ENCODE measurements at regions of chr5 and their contacts with region 1.

Region 1: GRCh38 chr5:125575891-125576505 is 829.6 kb upstream of the ZNF608 start:
- DNase-seq: peak; percentile 7 to 84 (median 74)
- H3K4me3 ChIP-seq: peak overlapping the region in 29 of 59 donors; percentile 2 to 47 (median 18)
- H3K27ac ChIP-seq: peak overlapping the region in 58 of 59 donors; percentile 1 to 91 (median 78)
- H3K27me3 ChIP-seq: no peaks in the 10 kb centered on the region
- CTCF ChIP-seq: peak in 35 of 56 donors; percentile 8 to 50 (median 33)

Region 2: DNA sequence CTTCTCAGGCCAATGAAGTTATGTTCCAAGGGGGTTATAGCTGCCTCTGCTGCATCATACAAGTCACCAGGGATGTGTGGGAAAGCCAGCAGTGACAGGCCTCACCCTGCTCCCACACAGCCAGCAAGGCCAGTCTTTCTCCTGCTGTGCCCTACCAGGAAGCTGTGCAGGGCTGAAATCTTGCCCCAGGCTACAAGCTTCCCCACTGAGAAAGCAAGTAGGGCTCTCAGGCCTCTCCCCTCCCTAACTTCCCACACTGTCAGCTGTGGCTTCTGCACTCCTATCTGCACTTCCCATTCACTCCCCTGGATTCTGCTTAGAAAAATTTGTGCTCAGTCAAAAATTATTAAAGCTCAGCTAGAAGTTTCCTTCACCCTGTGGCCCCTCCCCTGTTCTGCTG is 218.3 kb before region 1 on chr5:
- intact Hi-C with region 1: no loop called
- DNase-seq: no peak
- H3K4me3 ChIP-seq: no peak overlapping the region
- H3K27ac ChIP-seq: no peak overlapping the region
- H3K27me3 ChIP-seq: no peaks in the 10 kb centered on the region
- CTCF ChIP-seq: no peak

Region 3: GRCh38 chr5:125484742-125485641 is 91.0 kb before region 1 on chr5:
- intact Hi-C with region 1: loop called in 1 of 2 experiments (anchors 10 kb)
- DNase-seq: peak; percentile 22 to 94 (median 84)
- H3K4me3 ChIP-seq: peak overlapping the region in 31 of 59 donors; percentile 1 to 39 (median 12)
- H3K27ac ChIP-seq: peak overlapping the region; percentile 88 to 99 (median 96)
- H3K27me3 ChIP-seq: no peaks in the 10 kb centered on the region
- CTCF ChIP-seq: peak in 5 of 56 donors; percentile 6 to 21 (median 13)

Region 4: DNA sequence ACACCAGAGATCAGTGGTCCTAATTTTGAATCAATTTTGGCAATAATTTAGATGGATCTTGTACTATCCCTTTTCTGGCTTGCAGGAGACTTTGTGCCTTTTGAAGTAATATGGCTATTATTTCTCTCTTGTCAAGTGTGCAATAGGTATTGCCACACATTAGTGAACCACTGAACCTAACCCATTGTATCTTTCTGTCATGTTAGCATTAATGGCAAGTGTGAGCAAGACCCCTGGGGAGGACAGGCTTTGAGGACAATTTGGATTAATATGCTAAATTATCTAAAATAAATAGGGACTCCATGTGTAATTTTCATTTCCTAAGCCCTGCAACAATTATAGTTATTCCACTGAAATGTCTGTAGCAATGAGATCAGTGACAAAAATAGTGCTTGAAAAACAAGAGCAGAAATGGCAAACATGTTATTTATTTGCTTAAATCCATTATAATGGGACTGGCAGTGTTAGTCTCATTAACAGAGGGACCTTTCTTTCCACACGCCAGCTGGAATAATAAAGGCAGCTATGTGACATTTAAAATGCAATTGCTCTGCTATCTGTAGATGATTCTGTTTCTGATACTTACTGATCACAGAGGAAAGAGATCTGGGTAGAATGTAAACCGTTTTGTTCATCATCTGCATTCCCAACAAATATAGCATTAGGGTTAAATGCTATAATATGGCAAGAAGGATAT is 76.2 kb before region 1 on chr5:
- intact Hi-C with region 1: loop called in 1 of 2 experiments (anchors 5 kb)
- DNase-seq: no peak
- H3K4me3 ChIP-seq: peak overlapping the region in 2 of 59 donors; percentile 4 to 11
- H3K27ac ChIP-seq: peak overlapping the region; percentile 73 to 98 (median 94)
- H3K27me3 ChIP-seq: no peaks in the 10 kb centered on the region
- CTCF ChIP-seq: no peak

Measured in dorsolateral prefrontal cortex (tissue), 120 donors.